Thyroid gland (tissue), 4 donors: ENCODE measurements at regions of chr17 and their contacts with region 1.

Region 1: DNA sequence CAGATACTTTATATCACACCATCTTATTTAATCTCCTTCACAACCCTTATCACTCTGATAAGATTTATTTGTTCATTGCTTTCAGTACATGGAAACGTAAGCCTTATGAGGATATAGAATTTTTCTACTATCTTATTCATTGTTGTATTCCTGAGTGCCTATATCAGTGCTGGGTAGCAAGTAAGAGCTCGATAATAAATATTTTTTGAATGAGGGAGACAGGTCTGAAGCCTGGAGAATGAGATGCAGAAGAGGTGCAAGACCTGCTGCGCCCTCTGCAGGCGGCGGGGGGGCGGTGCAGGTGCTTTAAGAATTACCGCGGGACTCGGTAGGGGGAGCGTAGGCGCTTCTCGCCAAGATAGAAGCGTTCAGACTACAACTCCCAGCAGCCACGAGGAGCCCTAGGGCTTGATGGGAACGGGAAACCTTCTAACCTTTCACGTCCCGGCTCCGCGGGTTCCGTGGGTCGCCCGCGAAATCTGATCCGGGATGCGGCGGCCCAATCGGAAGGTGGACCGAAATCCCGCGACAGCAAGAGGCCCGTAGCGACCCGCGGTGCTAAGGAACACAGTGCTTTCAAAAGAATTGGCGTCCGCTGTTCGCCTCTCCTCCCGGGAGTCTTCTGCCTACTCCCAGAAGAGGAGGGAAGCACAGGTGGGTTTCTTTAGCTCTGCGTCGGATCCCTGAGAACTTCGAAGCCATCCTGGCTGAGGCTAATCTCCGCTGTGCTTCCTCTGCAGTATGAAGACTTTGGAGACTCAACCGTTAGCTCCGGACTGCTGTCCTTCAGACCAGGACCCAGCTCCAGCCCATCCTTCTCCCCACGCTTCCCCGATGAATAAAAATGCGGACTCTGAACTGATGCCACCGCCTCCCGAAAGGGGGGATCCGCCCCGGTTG is at the start of gene WRAP53:
- DNase-seq: peak; percentile 99
- H3K4me3 ChIP-seq: peak within 1 kb of the TSS; percentile 88 to 96 (median 89)
- H3K27ac ChIP-seq: peak within 1 kb of the TSS; percentile 89 to 99 (median 97)
- H3K4me1 ChIP-seq: peaks cover 21% of the 10 kb centered on the region in 2 donors
- H3K27me3 ChIP-seq: no peaks in the 10 kb centered on the region
- CTCF ChIP-seq: peak; percentile 92 to 99 (median 99)
- POLR2A ChIP-seq: peak in 1 of 2 donors; percentile 46
- total RNA-seq, gene WRAP53: 2.9 to 8.0 (median 4.6) TPM

Region 2: DNA sequence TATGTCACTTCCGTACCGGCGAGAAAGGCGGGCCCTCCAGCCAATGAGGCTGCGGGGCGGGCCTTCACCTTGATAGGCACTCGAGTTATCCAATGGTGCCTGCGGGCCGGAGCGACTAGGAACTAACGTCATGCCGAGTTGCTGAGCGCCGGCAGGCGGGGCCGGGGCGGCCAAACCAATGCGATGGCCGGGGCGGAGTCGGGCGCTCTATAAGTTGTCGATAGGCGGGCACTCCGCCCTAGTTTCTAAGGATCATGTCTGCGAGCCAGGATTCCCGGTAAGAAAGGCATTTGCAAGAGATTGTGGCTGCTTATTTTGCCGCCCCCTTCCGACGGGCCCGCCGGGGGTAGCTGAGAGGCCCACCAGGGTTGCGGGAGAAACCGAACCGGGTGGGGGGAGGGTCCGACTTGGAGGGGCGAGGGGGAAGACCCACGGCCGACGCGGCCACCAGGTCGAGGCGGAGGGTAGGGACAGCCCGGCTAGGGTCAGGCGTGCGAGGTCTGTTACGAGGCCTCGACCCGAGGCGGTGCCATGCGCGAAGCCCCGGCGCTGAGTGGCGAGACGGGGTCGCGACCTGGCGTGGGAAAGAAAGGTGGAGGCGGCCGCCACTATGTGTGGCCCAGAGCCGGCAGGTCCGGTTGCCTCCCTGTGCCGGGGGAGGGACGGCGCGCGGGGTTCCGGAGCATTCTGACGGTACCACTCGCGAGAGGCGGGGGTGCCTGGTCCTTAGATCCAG is 115.4 kb before region 1 on chr17:
- intact Hi-C with region 1: loop called (anchors 5 kb)
- DNase-seq: peak; percentile 53 to 99
- H3K4me3 ChIP-seq: peak overlapping the region; percentile 75 to 99 (median 99)
- H3K27ac ChIP-seq: peak overlapping the region; percentile 94 to 96 (median 95)
- H3K4me1 ChIP-seq: peaks cover 16 to 26% of the 10 kb centered on the region in 2 donors
- H3K27me3 ChIP-seq: no peaks in the 10 kb centered on the region
- CTCF ChIP-seq: peak in 1 of 6 experiments; percentile 6
- POLR2A ChIP-seq: peak; percentile 87 to 98

Region 3: GRCh38 chr17:7632492-7632894 is 55.7 kb before region 1 on chr17:
- intact Hi-C with region 1: loop called (anchors 5 kb)
- DNase-seq: peak; percentile 15 to 27
- H3K4me3 ChIP-seq: no peak overlapping the region
- H3K27ac ChIP-seq: no peak overlapping the region
- H3K4me1 ChIP-seq: peaks cover 0 to 4% of the 10 kb centered on the region in 2 donors
- H3K27me3 ChIP-seq: no peaks in the 10 kb centered on the region
- CTCF ChIP-seq: peak in 3 of 6 experiments; percentile 23 to 38 (median 38)
- POLR2A ChIP-seq: no peak